H1 (cell line): ENCODE measurements at regions of chr9 and their contacts with region 1.

Region 1: GRCh38 chr9:131393622-131394463 is at the start of gene PRRC2B:
- DNase-seq: peak; percentile 75 to 87
- H3K4me3 ChIP-seq: peak within 1 kb of the TSS; percentile 70 to 88 (median 83)
- H3K27ac ChIP-seq: peak within 1 kb of the TSS; percentile 85
- H3K4me1 ChIP-seq: peaks cover 8 to 28% (median 14%) of the 10 kb centered on the region in 4 experiments
- H3K27me3 ChIP-seq: no peaks in the 10 kb centered on the region
- CTCF ChIP-seq: peak in 2 of 3 experiments; percentile 42 to 63; a peak in 3 of 4 replicates
- EP300 ChIP-seq: no peak; a peak in 1 of 3 replicates
- POLR2A ChIP-seq: peak; percentile 57 to 64; a peak in 2 of 3 replicates
- RAD21 ChIP-seq: peak in 1 of 2 experiments; percentile 57; a peak in 2 of 4 replicates
- total RNA-seq, gene PRRC2B: 249 and 255 TPM in 2 replicates

Region 2: GRCh38 chr9:131382850-131383729 is 10.8 kb before region 1 on chr9:
- CTCF ChIA-PET with region 1: interaction called, 7 read pairs
- POLR2A ChIA-PET with region 1: interaction called, 23 read pairs
- DNase-seq: peak in 1 of 2 experiments; percentile 52
- H3K4me3 ChIP-seq: no peak overlapping the region
- H3K27ac ChIP-seq: 0 out of 2 replicates have a peak overlapping the region, but pooled peaks have one; percentile 31
- H3K4me1 ChIP-seq: peaks cover 4 to 12% (median 6%) of the 10 kb centered on the region in 4 experiments; a peak in 6 of 7 replicates
- H3K27me3 ChIP-seq: no peaks in the 10 kb centered on the region
- CTCF ChIP-seq: no peak
- EP300 ChIP-seq: no peak
- POLR2A ChIP-seq: no peak
- RAD21 ChIP-seq: 0 out of 4 replicates have a peak, but pooled peaks of 1 of the 2 experiments have one; percentile 16

Region 3: GRCh38 chr9:131407717-131408195 is 13.9 kb after region 1 on chr9:
- CTCF ChIA-PET with region 1: interaction called, 18 read pairs
- POLR2A ChIA-PET with region 1: interaction called, 78 read pairs
- DNase-seq: peak in 1 of 2 experiments; percentile 65
- H3K4me3 ChIP-seq: peak overlapping the region in 3 of 4 experiments; percentile 6 to 44 (median 11); a peak in 4 of 8 replicates
- H3K27ac ChIP-seq: peak overlapping the region; percentile 59; the same call in 1 of the 2 replicates
- H3K4me1 ChIP-seq: peaks cover 40 to 61% (median 47%) of the 10 kb centered on the region in 4 experiments
- H3K27me3 ChIP-seq: no peaks in the 10 kb centered on the region
- CTCF ChIP-seq: peak; percentile 59 to 64 (median 63)
- EP300 ChIP-seq: no peak
- POLR2A ChIP-seq: peak in 1 of 2 experiments; percentile 33; a peak in 1 of 3 replicates
- RAD21 ChIP-seq: peak; percentile 58 to 72

Region 4: GRCh38 chr9:131423171-131423581 is 29.3 kb after region 1 on chr9:
- CTCF ChIA-PET with region 1: interaction called, 9 read pairs
- POLR2A ChIA-PET with region 1: interaction called, 10 read pairs
- DNase-seq: peak in 1 of 2 experiments; percentile 53
- H3K4me3 ChIP-seq: peak overlapping the region in 1 of 4 experiments; percentile 19; a peak in 1 of 8 replicates
- H3K27ac ChIP-seq: no peak overlapping the region
- H3K4me1 ChIP-seq: peaks cover 21 to 39% (median 35%) of the 10 kb centered on the region in 4 experiments
- H3K27me3 ChIP-seq: no peaks in the 10 kb centered on the region
- CTCF ChIP-seq: no peak
- EP300 ChIP-seq: no peak
- POLR2A ChIP-seq: peak in 1 of 2 experiments; percentile 59; a peak in 1 of 3 replicates
- RAD21 ChIP-seq: no peak

Region 5: DNA sequence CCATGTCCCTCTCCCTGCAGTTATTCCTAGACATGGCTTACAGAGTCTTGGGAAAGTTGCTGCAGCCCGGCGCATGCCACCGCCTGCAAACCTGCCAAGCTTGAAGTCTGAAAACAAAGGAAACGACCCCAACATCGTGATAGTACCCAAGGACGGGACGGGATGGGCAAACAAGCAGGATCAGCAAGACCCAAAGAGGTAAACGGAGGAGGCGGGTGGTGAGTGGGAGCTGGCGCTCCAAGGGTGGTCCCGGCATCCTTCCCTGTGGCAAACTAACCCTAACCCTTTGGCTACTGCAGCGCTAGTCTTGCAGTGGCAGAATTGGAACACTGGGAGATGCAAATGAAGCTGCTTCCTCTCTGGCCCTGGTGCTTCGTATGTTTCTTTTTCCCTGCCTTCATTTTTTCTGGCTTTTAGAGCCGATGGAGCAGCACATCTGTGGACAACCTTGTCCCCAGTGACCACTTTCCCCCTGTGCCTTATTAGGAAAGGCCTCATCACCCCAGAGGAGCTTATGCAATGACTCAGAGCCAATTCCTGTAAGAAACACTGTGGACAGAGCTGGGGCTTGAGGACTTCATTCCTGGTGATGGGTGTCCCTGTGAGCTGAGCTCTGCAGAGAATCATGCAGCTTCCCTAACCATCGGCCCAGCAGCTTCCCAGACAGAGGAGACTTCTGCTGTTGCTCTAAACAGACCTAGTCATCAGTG is 38.9 kb after region 1 on chr9:
- CTCF ChIA-PET with region 1: interaction called, 6 read pairs
- POLR2A ChIA-PET with region 1: interaction called, 14 read pairs
- DNase-seq: no peak
- H3K4me3 ChIP-seq: no peak overlapping the region
- H3K27ac ChIP-seq: no peak overlapping the region
- H3K4me1 ChIP-seq: peaks cover 21 to 39% (median 22%) of the 10 kb centered on the region in 4 experiments
- H3K27me3 ChIP-seq: no peaks in the 10 kb centered on the region
- CTCF ChIP-seq: no peak
- EP300 ChIP-seq: no peak
- POLR2A ChIP-seq: 0 out of 3 replicates have a peak, but pooled peaks of 1 of the 2 experiments have one; percentile 44
- RAD21 ChIP-seq: no peak

Region 6: DNA sequence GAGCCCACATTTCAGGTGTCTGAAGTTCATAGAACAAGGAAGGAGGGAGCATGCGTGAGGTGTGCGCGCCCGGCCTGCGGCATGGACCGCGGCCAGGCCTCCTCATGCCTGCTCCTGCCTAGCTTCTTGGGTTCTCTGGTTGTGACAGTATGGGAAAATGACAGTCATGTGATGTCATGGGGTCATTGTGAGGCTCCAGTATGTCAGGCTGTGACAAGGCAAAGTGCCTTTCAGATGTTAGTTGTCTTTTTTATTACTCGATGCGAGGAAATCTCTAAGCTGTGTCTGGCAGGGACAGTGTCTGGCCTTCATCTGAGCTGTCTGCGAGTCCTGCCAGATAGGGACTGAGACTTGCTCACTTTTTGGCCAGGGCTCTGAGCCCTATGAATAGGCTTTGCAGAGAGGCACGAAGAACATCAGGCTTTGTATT is 123.9 kb after region 1 on chr9:
- CTCF ChIA-PET with region 1: no interaction called
- POLR2A ChIA-PET with region 1: no interaction called
- DNase-seq: no peak
- H3K4me3 ChIP-seq: no peak overlapping the region
- H3K27ac ChIP-seq: no peak overlapping the region
- H3K4me1 ChIP-seq: no peaks in the 10 kb centered on the region
- H3K27me3 ChIP-seq: no peaks in the 10 kb centered on the region
- CTCF ChIP-seq: no peak
- EP300 ChIP-seq: no peak
- POLR2A ChIP-seq: no peak
- RAD21 ChIP-seq: no peak